Posterior vena cava (tissue), 2 donors: ENCODE measurements at regions of chr5 and their contacts with region 1.

Region 1: DNA sequence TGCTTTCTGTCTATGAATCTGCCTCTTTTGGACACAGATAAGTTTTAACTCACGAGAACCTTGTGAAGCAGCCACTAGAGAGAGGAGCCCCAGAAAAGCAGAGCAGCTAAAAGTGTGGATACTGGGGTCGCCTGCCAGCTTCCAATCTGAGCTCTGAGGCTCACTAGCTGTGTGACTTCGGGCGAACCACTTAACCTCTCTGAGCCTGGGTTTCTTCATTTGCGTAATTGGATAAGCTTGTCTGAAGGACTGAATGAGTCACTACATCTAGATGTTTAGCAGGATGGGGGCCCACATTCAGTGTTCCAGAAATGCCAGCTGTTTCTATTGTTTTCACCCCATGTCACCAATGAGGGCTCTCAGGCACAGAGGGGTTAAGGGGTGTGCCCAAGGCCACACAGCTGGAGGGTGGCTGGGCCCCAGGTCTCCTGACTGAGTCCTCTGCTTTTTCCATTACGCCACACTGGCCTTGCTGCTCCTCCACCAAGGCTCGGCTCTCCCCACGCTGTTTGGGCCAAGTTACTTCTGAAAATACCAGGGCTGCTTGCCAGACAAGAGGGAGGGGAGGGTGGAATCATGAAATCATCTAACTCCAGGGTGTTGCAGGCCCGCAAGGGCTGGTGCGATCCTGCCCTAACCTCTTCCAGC is 36.2 kb downstream of the SH3PXD2B start:
- DNase-seq: peak; percentile 97

Region 2: DNA sequence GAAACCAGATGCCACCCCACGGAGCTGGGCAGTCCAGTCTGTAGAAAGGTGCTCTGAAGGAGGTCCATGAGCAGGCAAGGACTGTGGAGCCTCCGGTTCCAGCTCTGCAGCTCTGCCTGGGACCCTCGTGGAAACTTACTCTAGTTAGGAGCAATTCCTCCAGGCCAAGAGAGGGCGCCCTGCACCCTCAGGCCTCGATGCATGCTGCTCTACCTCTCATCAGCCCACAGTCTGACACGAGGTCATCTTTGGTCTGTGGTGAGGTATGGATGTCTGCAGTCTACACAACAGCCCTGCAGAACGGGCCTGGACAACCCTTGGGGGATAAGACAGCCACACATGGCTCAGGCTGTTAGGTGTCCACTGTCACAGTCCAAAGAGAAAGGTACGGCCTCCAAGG is 83.9 kb before region 1 on chr5:
- intact Hi-C with region 1: no loop called
- DNase-seq: peak; percentile 64

Region 3: DNA sequence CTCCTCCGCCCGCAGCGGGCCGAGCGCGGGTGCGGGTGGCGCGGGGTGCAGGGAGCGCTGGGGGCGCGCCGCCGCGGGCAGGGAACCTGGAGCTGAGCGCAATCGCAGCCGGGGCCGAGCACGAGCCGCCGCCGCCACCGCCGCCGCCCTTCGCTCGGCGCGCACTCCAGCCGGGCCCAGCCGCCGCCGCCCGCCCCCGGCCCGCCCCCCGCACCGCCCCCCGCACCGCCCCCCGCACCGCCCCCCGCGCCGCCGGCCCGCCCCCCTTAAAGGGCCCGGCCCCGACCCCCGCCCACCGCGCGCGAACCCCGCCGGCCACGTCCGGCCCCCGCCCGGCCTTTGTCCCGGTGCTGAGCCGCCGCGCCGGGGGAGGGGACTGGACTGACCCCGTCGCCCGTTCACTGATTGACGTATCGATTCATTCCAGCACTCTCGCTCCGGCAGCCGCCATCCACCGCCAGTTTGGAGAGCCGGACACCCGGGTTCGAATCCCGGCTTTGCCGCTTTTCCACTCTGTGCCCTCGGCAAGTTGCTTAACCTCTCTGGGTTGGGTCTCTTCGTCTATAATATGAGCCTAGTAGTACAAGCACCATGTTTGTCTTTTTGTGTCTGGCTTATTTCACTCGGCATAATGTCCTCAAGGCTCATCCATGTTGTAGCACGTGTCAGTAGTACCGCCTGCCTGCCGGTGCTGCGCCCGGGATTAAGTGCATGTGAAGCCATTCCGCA is 36.4 kb after region 1 on chr5 and contains the start of gene SH3PXD2B:
- intact Hi-C with region 1: loop called in 1 of 2 experiments (anchors 5 kb)
- DNase-seq: peak; percentile 86
- total RNA-seq, gene SH3PXD2B: 85.2 to 114 TPM